ENCODE measurements at regions of chr10 and their contacts with region 1.

Region 1: DNA sequence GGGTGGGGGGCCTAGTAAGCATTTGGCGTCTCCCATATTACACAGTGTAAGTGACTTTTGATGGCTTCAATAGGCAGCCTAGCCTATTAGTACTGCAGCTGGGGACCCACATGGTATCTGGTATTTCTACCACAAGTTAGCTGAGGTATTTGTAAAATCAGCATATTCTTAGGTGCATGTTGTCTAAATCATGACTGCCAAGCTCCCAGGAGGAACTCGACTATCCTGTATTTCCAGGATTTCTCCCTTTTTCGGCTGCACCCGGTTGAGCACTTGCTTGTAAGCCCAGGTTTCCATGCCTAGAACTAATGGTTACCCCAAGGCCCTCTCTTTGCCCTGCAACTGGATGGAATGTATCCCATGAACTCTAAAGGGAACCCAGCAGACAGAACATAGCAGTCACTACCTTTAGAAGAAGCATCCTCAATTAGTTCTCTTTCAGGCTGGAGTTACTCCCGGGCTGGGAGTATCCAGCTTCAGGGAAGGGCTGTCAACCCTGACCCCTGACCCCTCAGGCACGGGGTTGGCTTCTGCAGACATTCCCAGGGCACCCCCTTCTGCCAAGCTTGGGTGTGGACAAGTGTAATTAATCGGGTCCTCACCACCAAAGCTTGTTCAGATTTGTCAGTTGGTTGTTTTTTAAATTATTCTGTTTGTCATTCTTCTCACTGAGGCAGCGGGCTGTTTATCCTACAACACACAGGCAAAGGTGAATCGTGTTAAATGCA is 90.3 kb upstream of the PARD3 start:
- DNase-seq: no peak
- H3K4me3 Mint-ChIP-seq: no peak overlapping the region
- H3K27ac Mint-ChIP-seq: no peak overlapping the region
- H3K4me1 Mint-ChIP-seq: no peaks in the 10 kb centered on the region
- H3K27me3 Mint-ChIP-seq: no peaks in the 10 kb centered on the region

Region 2: DNA sequence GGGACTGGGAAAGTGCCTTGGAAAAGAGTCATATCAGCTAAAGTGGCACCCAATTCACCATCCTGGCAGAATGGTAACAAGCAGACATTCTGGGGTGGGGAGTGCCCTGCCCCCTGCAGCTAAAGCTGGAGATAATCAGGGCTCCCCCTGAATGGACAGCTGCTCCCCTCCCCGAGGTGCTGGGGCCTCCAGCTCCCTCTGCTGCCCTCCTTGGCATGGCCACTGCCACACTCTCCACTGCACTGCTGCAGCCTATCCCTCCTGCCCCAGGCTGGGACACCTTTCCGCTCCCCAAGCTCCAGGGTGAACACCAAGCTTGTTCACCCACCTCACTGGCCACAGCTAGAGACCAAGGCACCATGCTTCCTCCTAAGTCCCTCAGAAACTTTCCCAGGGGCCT is 80.5 kb before region 1 on chr10:
- CTCF ChIA-PET with region 1: interaction called, 14 read pairs
- intact Hi-C with region 1: no loop called
- DNase-seq: no peak
- H3K4me3 Mint-ChIP-seq: no peak overlapping the region
- H3K27ac Mint-ChIP-seq: no peak overlapping the region
- H3K4me1 Mint-ChIP-seq: peaks cover 1% of the 10 kb centered on the region
- H3K27me3 Mint-ChIP-seq: peaks cover 8% of the 10 kb centered on the region

Measured in activated naive CD4-positive, alpha-beta T cell treated with anti-CD3 and anti-CD28 coated beads for 36 hours (primary cell).